PC-3 (cell line): ENCODE measurements at regions of chr16 and their contacts with region 1.

Region 1: GRCh38 chr16:67100569-67101310 is 9.0 kb upstream of the PHAF1 start:
- DNase-seq: peak; percentile 42
- ATAC-seq: no peak; the same call in 1 of the 2 replicates
- H3K4me3 ChIP-seq: no peak overlapping the region
- H3K27ac ChIP-seq: no peak overlapping the region
- H3K4me1 ChIP-seq: no peaks in the 10 kb centered on the region
- H3K27me3 ChIP-seq: no peaks in the 10 kb centered on the region
- CTCF ChIP-seq: peak; percentile 57

Region 2: GRCh38 chr16:67017810-67018488 is 82.8 kb before region 1 on chr16:
- CTCF ChIA-PET with region 1: interaction called, 13 read pairs
- POLR2A ChIA-PET with region 1: no interaction called
- intact Hi-C with region 1: loop called (anchors 1 kb)
- DNase-seq: peak; percentile 93
- ATAC-seq: peak; percentile 88
- H3K4me3 ChIP-seq: no peak overlapping the region
- H3K27ac ChIP-seq: no peak overlapping the region
- H3K4me1 ChIP-seq: peaks cover 7% of the 10 kb centered on the region
- H3K27me3 ChIP-seq: no peaks in the 10 kb centered on the region
- CTCF ChIP-seq: peak; percentile 82

Region 3: DNA sequence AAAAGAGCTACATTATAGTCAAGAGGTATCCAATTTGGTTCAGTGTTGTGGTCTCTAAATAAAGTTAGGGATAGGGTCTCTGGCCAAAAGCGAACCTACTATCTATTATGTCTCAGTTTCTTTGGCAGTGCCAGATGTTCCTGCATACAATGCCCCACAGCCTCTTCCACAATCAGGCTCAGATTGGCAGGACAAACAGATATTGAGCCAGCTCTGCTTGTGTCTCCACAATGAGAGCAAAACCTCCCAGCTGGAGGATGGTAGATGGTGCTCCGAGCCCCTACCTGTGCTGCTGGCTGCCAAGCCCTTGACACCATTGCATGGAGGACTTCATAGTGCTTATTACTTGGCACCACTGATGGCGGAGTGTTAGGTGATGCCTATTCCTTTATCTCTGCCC is 28.7 kb after region 1 on chr16:
- CTCF ChIA-PET with region 1: no interaction called
- POLR2A ChIA-PET with region 1: no interaction called
- intact Hi-C with region 1: no loop called
- DNase-seq: no peak
- ATAC-seq: no peak
- H3K4me3 ChIP-seq: no peak overlapping the region
- H3K27ac ChIP-seq: no peak overlapping the region
- H3K4me1 ChIP-seq: no peaks in the 10 kb centered on the region
- H3K27me3 ChIP-seq: no peaks in the 10 kb centered on the region
- CTCF ChIP-seq: no peak

Region 4: GRCh38 chr16:67349172-67349571 is 248.4 kb after region 1 on chr16:
- CTCF ChIA-PET with region 1: no interaction called
- POLR2A ChIA-PET with region 1: no interaction called
- intact Hi-C with region 1: no loop called
- DNase-seq: peak; percentile 61
- ATAC-seq: peak; percentile 37; the same call in 1 of the 2 replicates
- H3K4me3 ChIP-seq: no peak overlapping the region
- H3K27ac ChIP-seq: no peak overlapping the region
- H3K4me1 ChIP-seq: peaks cover 25% of the 10 kb centered on the region
- H3K27me3 ChIP-seq: no peaks in the 10 kb centered on the region
- CTCF ChIP-seq: peak; percentile 60